HCT116 (cell line): ENCODE measurements at regions of chr15 and their contacts with region 1.

Region 1: DNA sequence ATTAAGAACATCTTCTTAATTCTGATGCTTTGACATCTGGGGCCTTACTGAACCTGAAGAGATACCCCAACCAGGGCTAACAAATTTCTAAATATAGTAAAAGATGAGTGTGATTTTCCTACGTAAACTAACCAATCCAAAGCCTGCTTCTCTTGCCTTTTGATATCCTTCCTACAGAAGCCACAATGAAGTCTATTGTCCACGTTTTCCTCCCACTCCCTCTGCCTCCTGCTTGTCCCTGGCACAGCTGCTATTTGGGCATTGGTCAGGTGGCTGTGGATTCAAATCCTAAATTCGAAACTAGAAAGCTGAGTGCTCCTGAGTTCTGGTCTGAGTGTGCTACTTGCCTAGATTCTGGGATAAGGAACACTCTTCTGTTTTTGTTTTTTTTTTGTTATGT is 17.4 kb upstream of the MKRN3 start:
- DNase-seq: no peak
- ATAC-seq: no peak
- H3K4me3 ChIP-seq: no peak overlapping the region
- H3K27ac ChIP-seq: no peak overlapping the region
- H3K4me1 ChIP-seq: no peaks in the 10 kb centered on the region
- H3K27me3 ChIP-seq: no peaks in the 10 kb centered on the region
- CTCF ChIP-seq: no peak
- POLR2A ChIP-seq: no peak
- RAD21 ChIP-seq: no peak

Region 2: DNA sequence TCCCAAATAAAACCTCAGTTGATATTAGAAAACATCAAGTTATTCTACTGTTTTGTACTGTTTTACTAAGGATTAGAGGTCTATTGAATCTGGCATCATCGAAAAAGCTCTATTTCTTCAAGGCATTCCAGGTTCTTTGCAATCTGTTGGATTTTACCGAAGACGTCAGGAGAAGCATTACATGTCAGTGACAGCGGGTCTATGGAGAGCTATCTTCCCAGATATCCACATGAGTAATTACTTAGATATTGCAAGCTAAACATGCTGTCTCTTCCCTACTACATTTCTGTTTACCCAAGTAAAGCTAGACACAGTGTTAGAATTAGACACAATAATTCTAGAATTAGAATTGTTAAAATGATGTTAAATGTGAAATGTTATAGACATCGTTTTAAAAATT is 90.2 kb before region 1 on chr15:
- CTCF ChIA-PET with region 1: no interaction called
- POLR2A ChIA-PET with region 1: no interaction called
- RAD21 ChIA-PET with region 1: no interaction called
- intact Hi-C with region 1: no loop called
- DNase-seq: no peak
- ATAC-seq: no peak
- H3K4me3 ChIP-seq: no peak overlapping the region
- H3K27ac ChIP-seq: no peak overlapping the region
- H3K4me1 ChIP-seq: no peaks in the 10 kb centered on the region
- H3K27me3 ChIP-seq: peaks cover 11% of the 10 kb centered on the region
- CTCF ChIP-seq: no peak
- POLR2A ChIP-seq: no peak
- RAD21 ChIP-seq: no peak

Region 3: DNA sequence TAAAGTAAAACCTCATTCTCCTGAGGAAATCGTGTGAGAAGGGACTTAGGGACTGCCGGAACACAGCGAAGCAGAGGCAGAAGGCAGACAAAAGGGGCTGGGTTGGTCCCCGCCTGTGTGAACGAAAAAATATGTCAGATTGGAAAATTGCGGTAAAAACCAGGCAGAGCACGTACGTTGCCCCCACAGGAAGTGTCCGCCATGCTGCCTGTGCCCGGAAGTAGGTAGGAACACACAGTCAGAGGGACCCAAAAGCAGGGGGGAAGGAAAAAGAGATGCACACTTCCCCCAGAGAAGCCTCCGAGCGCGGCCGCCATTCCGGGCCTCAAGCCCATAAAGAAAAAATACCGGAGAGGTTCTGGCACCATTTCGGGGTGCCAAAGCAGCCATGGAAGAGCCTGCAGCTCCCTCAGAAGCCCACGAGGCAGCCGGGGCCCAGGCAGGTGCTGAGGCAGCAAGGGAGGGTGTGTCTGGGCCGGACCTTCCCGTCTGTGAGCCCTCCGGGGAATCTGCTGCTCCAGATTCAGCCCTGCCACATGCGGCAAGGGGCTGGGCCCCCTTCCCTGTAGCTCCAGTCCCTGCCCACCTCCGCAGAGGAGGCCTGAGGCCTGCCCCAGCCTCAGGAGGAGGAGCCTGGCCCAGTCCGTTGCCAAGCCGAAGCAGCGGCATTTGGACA is 17.5 kb after region 1 on chr15 and contains the start of gene MKRN3:
- CTCF ChIA-PET with region 1: no interaction called
- POLR2A ChIA-PET with region 1: no interaction called
- RAD21 ChIA-PET with region 1: no interaction called
- intact Hi-C with region 1: loop called (anchors 2 kb)
- DNase-seq: peak; percentile 87
- ATAC-seq: peak; percentile 83
- H3K4me3 ChIP-seq: peak within 1 kb of the TSS; percentile 85 to 99
- H3K27ac ChIP-seq: peak within 1 kb of the TSS; percentile 98
- H3K4me1 ChIP-seq: peaks cover 15 to 28% of the 10 kb centered on the region in 2 experiments
- H3K27me3 ChIP-seq: no peaks in the 10 kb centered on the region
- CTCF ChIP-seq: no peak
- POLR2A ChIP-seq: peak; percentile 77
- RAD21 ChIP-seq: no peak
- total RNA-seq, gene MKRN3: 10.1 TPM